OCI-LY7 (cell line): ENCODE measurements at regions of chr2 and their contacts with region 1.

Region 1: DNA sequence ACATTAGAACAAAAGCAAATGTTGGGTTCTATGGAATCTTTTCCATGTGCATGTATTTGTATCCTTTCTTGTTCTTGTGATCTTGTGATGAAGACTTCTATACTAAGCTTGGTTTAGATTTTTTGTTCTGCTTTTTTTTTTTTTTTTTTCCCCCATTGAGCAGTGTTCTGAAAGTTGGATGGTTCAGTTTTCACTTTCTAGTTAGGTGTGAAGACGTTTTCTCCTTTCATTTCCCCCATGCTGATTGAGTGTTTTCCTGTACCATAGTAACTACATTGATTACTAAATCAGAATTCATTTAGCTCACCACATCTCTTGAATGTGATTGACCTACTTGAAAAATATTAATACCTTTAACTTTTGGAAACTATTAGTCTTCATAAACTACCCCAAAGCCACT is 34.1 kb downstream of the NOP58 start:
- DNase-seq: no peak
- H3K4me3 ChIP-seq: no peak overlapping the region
- H3K27ac ChIP-seq: no peak overlapping the region
- H3K4me1 ChIP-seq: no peaks in the 10 kb centered on the region
- CTCF ChIP-seq: no peak

Region 2: GRCh38 chr2:202278944-202279343 is 20.8 kb before region 1 on chr2:
- CTCF ChIA-PET with region 1: no interaction called
- POLR2A ChIA-PET with region 1: interaction called, 5 read pairs
- intact Hi-C with region 1: loop called (anchors 2 kb)
- DNase-seq: peak; percentile 22
- H3K4me3 ChIP-seq: no peak overlapping the region
- H3K27ac ChIP-seq: no peak overlapping the region
- H3K4me1 ChIP-seq: no peaks in the 10 kb centered on the region
- CTCF ChIP-seq: peak; percentile 76

Region 3: DNA sequence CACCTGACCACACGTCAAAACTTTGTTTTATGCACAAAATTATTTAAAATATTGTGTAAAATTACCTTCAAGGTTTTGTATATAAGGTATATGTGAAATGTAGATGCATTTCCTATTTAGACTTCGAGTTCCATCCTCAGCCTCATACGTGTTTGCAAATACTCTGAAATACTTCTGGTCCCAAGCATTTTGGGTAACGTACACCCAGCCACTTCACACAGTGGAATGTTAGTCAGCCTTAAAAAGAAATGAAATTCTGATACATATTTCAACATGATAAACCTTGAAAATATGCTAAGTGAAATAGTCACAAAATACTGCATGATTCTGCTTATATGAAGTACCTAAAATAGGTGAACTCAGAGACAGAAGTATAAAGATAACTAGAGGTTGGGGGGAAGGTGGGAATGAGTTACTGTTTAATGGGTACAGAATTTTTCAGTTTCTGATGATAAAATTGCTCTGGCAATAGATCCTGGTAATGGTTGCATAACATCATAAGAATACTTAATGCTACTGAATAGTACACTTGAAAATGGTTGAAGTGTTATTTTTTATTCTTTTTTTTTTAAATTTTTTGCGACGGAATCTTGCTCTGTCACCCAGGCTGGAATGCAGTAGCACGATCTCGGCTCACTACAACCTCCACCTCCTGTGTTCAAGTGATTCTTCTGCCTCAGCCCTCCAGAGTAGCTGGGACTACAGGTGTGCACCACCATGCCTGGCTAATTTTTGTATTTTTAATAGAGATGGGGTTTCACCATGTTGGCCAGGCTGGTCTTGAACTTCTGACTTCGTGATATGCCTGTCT is 10.1 kb before region 1 on chr2:
- CTCF ChIA-PET with region 1: no interaction called
- POLR2A ChIA-PET with region 1: interaction called, 4 read pairs
- intact Hi-C with region 1: loop called (anchors 2 kb)
- DNase-seq: no peak
- H3K4me3 ChIP-seq: no peak overlapping the region
- H3K27ac ChIP-seq: no peak overlapping the region
- H3K4me1 ChIP-seq: no peaks in the 10 kb centered on the region
- CTCF ChIP-seq: no peak

Region 4: GRCh38 chr2:202375609-202376408 is 76.1 kb after region 1 on chr2 and contains the start of gene BMPR2:
- CTCF ChIA-PET with region 1: no interaction called
- POLR2A ChIA-PET with region 1: no interaction called
- intact Hi-C with region 1: no loop called
- DNase-seq: peak; percentile 84
- H3K4me3 ChIP-seq: peak within 1 kb of the TSS; percentile 91
- H3K27ac ChIP-seq: peak within 1 kb of the TSS; percentile 47
- H3K4me1 ChIP-seq: peaks cover 24% of the 10 kb centered on the region
- CTCF ChIP-seq: no peak
- total RNA-seq, gene BMPR2: 3.2 and 4.3 TPM in 2 replicates

Region 5: GRCh38 chr2:202771741-202772460 is 472.2 kb after region 1 on chr2:
- CTCF ChIA-PET with region 1: no interaction called
- POLR2A ChIA-PET with region 1: no interaction called
- intact Hi-C with region 1: no loop called
- DNase-seq: no peak
- H3K4me3 ChIP-seq: no peak overlapping the region
- H3K27ac ChIP-seq: no peak overlapping the region
- H3K4me1 ChIP-seq: no peaks in the 10 kb centered on the region
- CTCF ChIP-seq: no peak